Activated CD4-positive, alpha-beta T cell treated with anti-CD3 and anti-CD28 coated beads, Interleukin-2, amount 10 ng/mL, durations not matched to agents 7 days and 5 days (primary cell): ENCODE measurements at regions of chr20 and their contacts with region 1.

Region 1: GRCh38 chr20:53491462-53491861 is 102.2 kb downstream of the ZNF217 start:
- DNase-seq: no peak
- H3K4me3 Mint-ChIP-seq: no peak overlapping the region
- H3K27ac Mint-ChIP-seq: no peak overlapping the region
- H3K4me1 Mint-ChIP-seq: no peaks in the 10 kb centered on the region
- H3K27me3 Mint-ChIP-seq: no peaks in the 10 kb centered on the region

Region 2: GRCh38 chr20:53480913-53481312 is 10.5 kb before region 1 on chr20:
- CTCF ChIA-PET with region 1: no interaction called
- POLR2A ChIA-PET with region 1: interaction called, 10 read pairs
- DNase-seq: no peak
- H3K4me3 Mint-ChIP-seq: no peak overlapping the region
- H3K27ac Mint-ChIP-seq: no peak overlapping the region
- H3K4me1 Mint-ChIP-seq: no peaks in the 10 kb centered on the region
- H3K27me3 Mint-ChIP-seq: no peaks in the 10 kb centered on the region

Region 3: GRCh38 chr20:53510262-53510661 is 18.8 kb after region 1 on chr20:
- CTCF ChIA-PET with region 1: no interaction called
- POLR2A ChIA-PET with region 1: no interaction called
- DNase-seq: no peak
- H3K4me3 Mint-ChIP-seq: no peak overlapping the region
- H3K27ac Mint-ChIP-seq: no peak overlapping the region
- H3K4me1 Mint-ChIP-seq: no peaks in the 10 kb centered on the region
- H3K27me3 Mint-ChIP-seq: no peaks in the 10 kb centered on the region